GM12878 (cell line): ENCODE measurements at regions of chr16 and their contacts with region 1.

Region 1: DNA sequence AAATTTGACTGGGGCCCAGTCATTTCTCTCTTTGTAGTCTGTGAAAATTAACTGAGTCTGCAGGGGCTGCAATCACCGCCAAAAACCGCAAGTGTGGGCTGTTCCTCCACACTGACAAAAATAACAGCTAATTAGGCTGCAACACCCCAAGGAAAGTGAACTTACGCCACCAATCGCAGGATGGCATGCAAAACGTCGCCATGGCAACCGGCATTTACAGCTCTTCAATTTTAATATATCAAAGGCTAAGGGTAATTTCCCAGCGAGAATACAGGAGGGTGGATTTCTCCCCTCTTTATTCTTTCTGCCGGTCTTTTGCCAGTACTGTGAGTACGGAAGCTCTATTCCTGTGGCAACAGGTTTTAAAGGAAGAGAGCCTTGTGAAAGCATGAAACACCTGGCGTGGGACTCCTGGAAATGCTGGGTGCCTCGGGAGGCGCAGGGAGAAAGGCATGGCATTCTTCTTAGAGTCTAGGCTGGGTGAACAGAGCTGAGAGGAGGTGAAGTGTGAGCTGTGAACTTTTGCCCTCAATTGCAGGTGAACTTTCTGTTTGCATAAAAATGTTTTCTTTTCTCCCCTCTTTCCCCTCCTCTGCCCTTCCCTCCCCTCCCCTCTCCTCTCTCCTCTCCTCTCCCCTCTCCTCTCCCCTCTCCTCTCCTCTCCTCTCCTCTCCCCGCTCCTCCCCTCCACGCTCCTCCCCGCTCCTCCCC is 399.7 kb downstream of the XYLT1 start:
- DNase-seq: peak; percentile 98
- ATAC-seq: peak; percentile 81
- H3K4me3 ChIP-seq: peak overlapping the region; percentile 77
- H3K27ac ChIP-seq: peak overlapping the region; percentile 95
- H3K4me1 ChIP-seq: peaks cover 44% of the 10 kb centered on the region
- H3K27me3 ChIP-seq: no peaks in the 10 kb centered on the region
- CTCF ChIP-seq: 0 out of 6 replicates have a peak, but pooled peaks of 1 of the 3 experiments have one; percentile 16
- EP300 ChIP-seq: peak; percentile 89 to 94
- POLR2A ChIP-seq: no peak
- RAD21 ChIP-seq: 0 out of 2 replicates have a peak, but pooled peaks have one; percentile 23

Region 2: DNA sequence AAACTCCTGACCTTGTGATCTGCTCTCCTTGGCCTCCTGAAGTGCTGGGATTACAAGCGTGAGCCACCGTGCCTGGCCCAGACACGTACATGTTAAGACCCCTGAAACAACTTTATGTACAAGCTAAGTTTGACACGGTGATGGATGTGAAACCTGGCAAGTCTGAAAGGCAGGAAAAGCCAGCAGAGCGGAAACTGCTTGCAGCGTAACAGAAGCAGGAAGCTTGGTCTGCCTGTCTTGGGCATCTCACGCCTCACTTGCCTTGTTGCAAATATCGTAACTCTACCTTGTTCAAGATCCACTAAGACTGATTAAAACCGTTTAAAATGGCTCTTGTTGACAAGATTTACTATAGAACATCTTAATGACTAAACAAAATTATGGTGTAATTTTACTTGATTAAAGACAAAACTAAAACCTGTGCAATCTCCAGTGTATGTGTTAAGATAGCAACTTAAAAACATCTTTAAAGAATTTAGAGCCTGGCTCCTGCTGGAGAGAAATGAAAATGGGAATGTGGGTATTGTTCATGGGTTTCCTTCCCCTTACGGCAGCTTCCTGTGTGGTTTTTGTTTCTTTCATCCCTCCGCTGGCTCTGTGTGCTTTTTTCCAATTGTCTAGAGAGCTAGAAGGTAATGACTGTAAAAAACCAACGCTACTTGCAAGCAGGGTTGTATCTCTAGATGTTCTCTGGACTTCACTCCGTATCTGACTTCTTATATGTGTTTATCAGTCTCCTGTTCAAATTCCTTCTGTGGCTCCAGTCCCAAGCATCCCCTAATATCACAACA is 77.9 kb before region 1 on chr16:
- CTCF ChIA-PET with region 1: interaction called, 12 read pairs
- POLR2A ChIA-PET with region 1: interaction called, 4 read pairs
- RAD21 ChIA-PET with region 1: interaction called, 32 read pairs
- SMC1A ChIA-PET with region 1: interaction called, 6 read pairs
- in situ Hi-C with region 1: no loop called
- intact Hi-C with region 1: no loop called
- DNase-seq: peak; percentile 20
- ATAC-seq: peak; percentile 57
- H3K4me3 ChIP-seq: no peak overlapping the region
- H3K27ac ChIP-seq: no peak overlapping the region
- H3K4me1 ChIP-seq: peaks cover 18% of the 10 kb centered on the region
- H3K27me3 ChIP-seq: no peaks in the 10 kb centered on the region
- CTCF ChIP-seq: no peak
- EP300 ChIP-seq: no peak
- POLR2A ChIP-seq: no peak
- RAD21 ChIP-seq: no peak

Region 3: GRCh38 chr16:17013038-17013437 is 58.0 kb before region 1 on chr16:
- CTCF ChIA-PET with region 1: interaction called, 15 read pairs
- POLR2A ChIA-PET with region 1: interaction called, 3 read pairs
- RAD21 ChIA-PET with region 1: interaction called, 11 read pairs
- SMC1A ChIA-PET with region 1: interaction called, 23 read pairs
- in situ Hi-C with region 1: no loop called
- intact Hi-C with region 1: loop called (anchors 5 kb)
- DNase-seq: no peak
- ATAC-seq: no peak
- H3K4me3 ChIP-seq: no peak overlapping the region
- H3K27ac ChIP-seq: peak overlapping the region; percentile 65; the same call in 1 of the 2 replicates
- H3K4me1 ChIP-seq: peaks cover 8% of the 10 kb centered on the region; the same call in 1 of the 2 replicates
- H3K27me3 ChIP-seq: no peaks in the 10 kb centered on the region
- CTCF ChIP-seq: no peak
- EP300 ChIP-seq: no peak
- POLR2A ChIP-seq: no peak
- RAD21 ChIP-seq: no peak

Region 4: DNA sequence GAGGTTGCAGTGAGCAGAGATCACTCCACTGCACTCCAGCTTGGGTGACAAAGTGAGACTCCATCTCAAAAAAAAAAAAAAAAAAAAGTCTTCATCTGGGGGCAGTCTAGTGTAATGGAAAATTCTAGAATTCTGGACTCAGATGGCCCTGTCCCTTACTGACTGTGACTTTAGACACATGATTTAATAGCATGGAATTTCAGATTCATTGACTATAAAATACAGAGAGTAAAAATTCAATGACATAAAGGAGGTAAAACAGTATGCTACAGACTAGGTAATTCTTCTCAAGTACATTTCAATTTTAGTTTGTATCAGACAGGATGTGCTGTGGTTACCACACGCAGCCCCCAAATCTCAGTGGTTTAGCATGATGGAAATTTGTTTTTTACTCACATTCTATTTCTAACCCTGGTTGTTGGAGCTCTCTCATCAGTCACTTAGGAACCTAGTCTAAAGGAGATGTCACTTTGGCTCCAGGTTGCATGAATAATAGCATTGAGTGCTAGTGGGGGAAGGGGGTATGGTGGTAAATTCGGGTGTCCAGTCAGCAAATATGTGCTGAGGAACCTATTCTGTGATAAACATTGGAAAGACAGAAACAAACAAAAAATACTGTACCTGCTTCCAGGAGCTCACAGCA is 44.3 kb before region 1 on chr16:
- CTCF ChIA-PET with region 1: interaction called, 16 read pairs
- POLR2A ChIA-PET with region 1: interaction called, 27 read pairs
- RAD21 ChIA-PET with region 1: interaction called, 101 read pairs
- SMC1A ChIA-PET with region 1: interaction called, 179 read pairs
- in situ Hi-C with region 1: no loop called
- intact Hi-C with region 1: loop called (anchors 1 kb)
- DNase-seq: peak; percentile 92
- ATAC-seq: peak; percentile 83
- H3K4me3 ChIP-seq: peak overlapping the region; percentile 19; the same call in 1 of the 2 replicates
- H3K27ac ChIP-seq: peak overlapping the region; percentile 96
- H3K4me1 ChIP-seq: peaks cover 40% of the 10 kb centered on the region
- H3K27me3 ChIP-seq: no peaks in the 10 kb centered on the region
- CTCF ChIP-seq: no peak
- EP300 ChIP-seq: peak; percentile 91 to 97
- POLR2A ChIP-seq: no peak
- RAD21 ChIP-seq: peak; percentile 36

Region 5: DNA sequence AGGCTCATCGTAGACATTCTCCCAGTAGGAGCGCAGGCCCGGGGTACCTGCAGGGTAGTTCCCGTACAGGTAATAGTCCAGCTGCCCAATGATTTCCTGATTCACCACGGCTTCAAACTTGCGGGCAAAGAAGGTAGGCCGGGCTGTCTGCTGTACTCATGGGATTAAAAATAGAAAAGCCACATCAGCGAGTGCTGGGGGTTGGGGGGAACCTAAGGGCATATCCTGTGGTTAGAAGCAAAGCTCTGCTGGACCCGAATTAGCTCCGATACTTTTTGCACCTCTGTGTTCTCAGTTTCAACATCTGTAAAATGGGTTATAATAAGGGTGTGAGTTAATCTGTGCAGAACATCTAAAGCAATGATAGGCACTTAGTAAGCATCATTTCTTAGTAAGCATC is 63.5 kb after region 1 on chr16:
- CTCF ChIA-PET with region 1: interaction called, 12 read pairs
- POLR2A ChIA-PET with region 1: interaction called, 4 read pairs
- RAD21 ChIA-PET with region 1: interaction called, 36 read pairs
- SMC1A ChIA-PET with region 1: interaction called, 18 read pairs
- in situ Hi-C with region 1: no loop called
- intact Hi-C with region 1: loop called (anchors 2 kb)
- DNase-seq: peak; percentile 82
- ATAC-seq: peak; percentile 97
- H3K4me3 ChIP-seq: no peak overlapping the region
- H3K27ac ChIP-seq: no peak overlapping the region
- H3K4me1 ChIP-seq: peaks cover 26% of the 10 kb centered on the region
- H3K27me3 ChIP-seq: no peaks in the 10 kb centered on the region
- CTCF ChIP-seq: no peak
- EP300 ChIP-seq: peak; percentile 42 to 77; a peak in 3 of 4 replicates
- POLR2A ChIP-seq: no peak
- RAD21 ChIP-seq: no peak